ENCODE measurements at regions of chr22 and their contacts with region 1.

Region 1: DNA sequence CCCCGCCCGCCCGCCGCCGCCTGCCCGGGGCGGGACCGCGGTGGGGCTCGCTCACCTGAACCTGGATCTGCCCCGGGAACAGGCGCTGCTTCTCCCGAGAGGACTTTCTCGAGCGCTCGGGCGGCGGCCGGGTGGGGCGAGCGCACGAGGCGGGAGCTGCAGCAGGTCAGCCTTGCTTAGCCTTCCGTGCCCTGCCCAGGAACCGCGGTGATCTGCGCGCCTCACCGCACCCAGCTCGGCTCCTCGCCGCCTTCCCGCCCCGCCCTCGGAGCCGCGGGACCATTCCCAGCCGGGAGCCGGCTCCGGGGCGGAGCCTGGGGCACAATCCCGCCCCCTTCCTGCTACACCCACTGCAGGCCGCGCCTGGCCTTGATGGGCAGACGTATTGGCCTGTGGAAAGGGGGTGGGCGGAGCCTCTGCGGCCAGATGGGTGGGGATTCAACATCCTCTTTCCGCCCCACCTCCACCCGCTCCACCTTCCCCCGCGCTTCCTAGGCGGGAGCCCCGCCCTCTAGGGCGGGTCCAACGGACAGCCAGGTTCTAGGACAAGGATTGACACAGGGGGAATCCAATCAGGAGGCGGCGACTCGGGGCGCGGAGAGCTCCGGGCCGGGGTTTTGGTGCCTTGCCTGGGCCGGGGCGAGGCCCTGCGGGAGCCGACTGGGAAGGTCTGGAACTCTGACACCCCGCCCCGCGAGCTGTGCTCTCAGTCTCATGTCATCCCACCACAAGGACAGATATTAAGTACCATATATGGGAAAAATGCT is at the start of gene MYH9:
- DNase-seq: peak; percentile 100
- ATAC-seq: peak; percentile 78
- total RNA-seq, gene MYH9: 581 to 641 TPM

Region 2: GRCh38 chr22:36461669-36462649 is 74.0 kb after region 1 on chr22:
- intact Hi-C with region 1: loop called in 1 of 2 experiments (anchors 10 kb)
- DNase-seq: peak in 1 of 2 donors; percentile 49
- ATAC-seq: no peak